Pancreas (tissue), 10 donors: ENCODE measurements at regions of chr22 and their contacts with region 1.

Region 1: GRCh38 chr22:37316875-37317371 is 34.6 kb downstream of the CYTH4 start:
- DNase-seq: peak; percentile 65 to 88 (median 78)
- ATAC-seq: peak; percentile 92 to 97 (median 94)
- H3K4me3 ChIP-seq: no peak overlapping the region
- H3K27ac ChIP-seq: no peak overlapping the region
- H3K4me1 ChIP-seq: no peaks in the 10 kb centered on the region
- H3K27me3 ChIP-seq: no peaks in the 10 kb centered on the region
- CTCF ChIP-seq: peak; percentile 58 to 81 (median 74)

Region 2: DNA sequence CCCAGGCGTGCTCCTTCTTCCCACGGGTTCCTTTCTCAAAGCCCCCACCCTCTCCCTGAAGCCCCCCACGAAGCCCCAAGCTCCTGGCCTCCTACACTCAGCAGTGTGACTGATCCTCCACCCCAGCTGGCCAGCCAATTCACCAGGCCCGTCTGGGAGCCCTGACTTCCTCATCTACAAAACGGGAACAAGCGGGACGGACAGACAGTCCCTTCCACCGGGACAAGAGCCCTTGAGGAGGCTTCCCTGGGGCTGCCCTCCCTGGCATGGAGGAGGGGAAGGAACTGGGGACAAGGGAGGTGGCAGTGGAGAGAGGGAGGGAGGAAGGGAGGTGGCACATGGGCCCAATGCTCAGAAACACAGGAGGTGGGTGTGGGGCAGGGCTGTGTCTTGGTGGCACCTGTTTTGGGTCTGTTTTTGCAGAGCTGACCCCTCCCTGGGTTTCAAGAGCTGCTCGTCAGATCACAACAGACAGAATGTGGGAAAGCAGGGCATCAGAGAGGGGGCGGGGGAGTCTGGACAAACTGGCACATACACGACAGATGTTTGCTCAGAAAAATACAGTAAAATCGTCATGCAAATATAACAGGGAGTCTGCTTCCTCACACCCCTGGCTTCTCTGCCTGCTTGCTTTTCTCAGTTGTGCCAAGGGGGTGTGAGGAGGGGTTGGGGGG is 53.5 kb after region 1 on chr22:
- intact Hi-C with region 1: no loop called
- DNase-seq: no peak
- ATAC-seq: peak in 2 of 4 donors; percentile 39 to 69
- H3K4me3 ChIP-seq: no peak overlapping the region
- H3K27ac ChIP-seq: no peak overlapping the region
- H3K4me1 ChIP-seq: no peaks in the 10 kb centered on the region
- H3K27me3 ChIP-seq: no peaks in the 10 kb centered on the region
- CTCF ChIP-seq: no peak

Region 3: DNA sequence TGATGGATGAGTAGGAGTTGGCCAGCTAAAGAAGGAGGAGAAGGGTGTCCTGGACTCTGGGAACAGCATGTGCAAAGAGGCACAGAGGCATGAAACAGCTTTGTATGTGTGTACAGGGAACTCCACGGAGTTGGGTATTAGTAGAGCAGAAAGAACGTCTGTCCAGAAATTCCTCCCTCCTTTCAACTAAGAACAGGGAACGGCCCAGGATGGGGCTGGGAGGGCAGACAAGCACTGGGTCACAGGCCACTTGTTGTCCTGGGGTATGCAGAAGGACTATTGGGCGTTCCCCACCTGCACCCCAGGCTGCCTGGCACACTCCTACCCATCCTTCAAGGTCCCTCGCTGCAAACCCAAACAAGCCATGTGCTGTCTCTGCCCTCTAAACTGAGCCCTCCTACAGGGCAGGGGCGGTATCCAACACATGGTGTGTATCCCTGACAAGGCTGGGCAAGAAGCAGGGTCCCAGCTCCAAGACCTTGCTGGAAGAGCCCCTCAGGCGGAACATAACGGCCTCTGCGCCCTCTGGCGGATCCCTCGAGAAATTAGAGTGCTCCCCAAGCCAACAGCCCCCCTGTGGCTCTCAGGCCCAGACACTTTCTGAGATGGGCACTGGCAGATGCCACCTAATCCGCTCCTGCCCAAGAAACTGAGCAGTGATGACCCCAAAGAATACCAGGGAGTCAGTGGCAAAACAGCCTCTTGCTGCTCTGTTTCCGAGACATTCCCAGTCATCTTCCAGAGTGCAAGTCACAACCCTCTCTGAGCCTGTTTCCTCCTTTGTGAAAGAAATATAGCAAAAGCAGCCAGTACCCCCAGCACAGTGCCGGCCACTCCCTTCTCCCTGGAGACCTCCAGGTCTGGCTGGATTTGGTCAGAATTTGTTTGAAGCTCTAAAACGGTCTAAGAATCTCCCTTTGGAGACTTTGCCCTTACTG is 112.0 kb after region 1 on chr22:
- intact Hi-C with region 1: loop called in 1 of 3 experiments (anchors 5 kb)
- DNase-seq: peak in 2 of 6 donors; percentile 39 to 75
- ATAC-seq: peak in 3 of 4 donors; percentile 41 to 65 (median 60)
- H3K4me3 ChIP-seq: no peak overlapping the region
- H3K27ac ChIP-seq: no peak overlapping the region
- H3K4me1 ChIP-seq: no peaks in the 10 kb centered on the region
- H3K27me3 ChIP-seq: peaks cover 0 to 16% (median 0%) of the 10 kb centered on the region in 4 donors
- CTCF ChIP-seq: peak in 3 of 4 donors; percentile 28 to 56 (median 38)

Region 4: GRCh38 chr22:37457093-37457893 is 140.4 kb after region 1 on chr22:
- intact Hi-C with region 1: loop called (anchors 2 to 10 kb)
- DNase-seq: peak; percentile 67 to 93 (median 88)
- ATAC-seq: peak; percentile 82 to 94 (median 92)
- H3K4me3 ChIP-seq: no peak overlapping the region
- H3K27ac ChIP-seq: no peak overlapping the region
- H3K4me1 ChIP-seq: peaks cover 0 to 5% (median 0%) of the 10 kb centered on the region in 3 donors
- H3K27me3 ChIP-seq: peaks cover 0 to 5% (median 0%) of the 10 kb centered on the region in 4 donors
- CTCF ChIP-seq: peak; percentile 80 to 96 (median 86)